Dorsolateral prefrontal cortex (tissue), 120 donors: ENCODE measurements at regions of chr7 and their contacts with region 1.

Region 1: DNA sequence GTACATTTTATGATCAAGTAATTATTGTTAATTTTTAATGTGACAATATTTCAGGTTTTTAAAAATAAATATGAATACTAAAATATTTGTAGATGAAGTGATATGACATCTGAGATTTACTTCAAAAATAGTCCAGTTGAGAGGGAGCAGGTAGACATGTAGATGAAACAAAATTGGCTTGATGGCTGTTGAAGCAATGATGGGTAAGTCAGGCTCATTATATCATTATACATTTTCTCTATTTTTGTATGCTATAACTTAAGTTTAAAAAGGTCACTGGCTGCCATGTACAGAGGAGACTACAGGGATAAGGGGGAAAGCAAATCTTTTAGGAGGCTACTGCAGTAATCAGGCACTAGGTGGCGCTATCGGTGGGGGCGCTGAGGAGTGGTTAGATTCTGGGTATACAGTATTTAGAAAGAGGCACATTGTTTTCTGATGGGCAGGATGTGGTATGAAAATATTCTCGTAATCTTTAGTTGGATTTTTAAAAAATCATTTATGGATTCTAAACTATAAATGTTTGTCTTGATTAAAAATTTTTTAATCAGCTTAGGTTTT is 189.8 kb upstream of the IMMP2L start:
- DNase-seq: peak in 8 of 10 donors; percentile 22 to 64 (median 56)
- H3K4me3 ChIP-seq: no peak overlapping the region
- H3K27ac ChIP-seq: peak overlapping the region in 21 of 59 donors; percentile 8 to 96 (median 90)
- H3K27me3 ChIP-seq: no peaks in the 10 kb centered on the region
- CTCF ChIP-seq: peak; percentile 53 to 84 (median 74)

Region 2: DNA sequence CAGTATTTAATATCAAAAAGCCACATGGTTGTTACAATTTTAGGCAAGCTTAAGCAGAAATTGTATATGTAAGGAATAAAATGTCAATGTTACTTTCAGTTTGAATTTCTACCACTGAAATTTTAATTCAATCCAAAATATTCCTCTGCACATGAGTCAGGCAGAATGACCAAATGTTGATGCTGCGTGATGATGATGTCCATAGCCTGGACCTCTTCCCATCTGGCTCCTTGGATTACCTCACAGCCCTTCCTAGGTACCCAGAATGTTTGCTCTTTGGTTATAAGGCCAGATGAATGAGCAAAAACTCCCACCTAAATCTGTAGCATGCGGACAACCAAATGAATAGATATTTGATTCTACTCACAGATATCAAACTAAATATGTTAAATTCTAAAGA is 68.5 kb after region 1 on chr7:
- intact Hi-C with region 1: no loop called
- DNase-seq: peak in 1 of 10 donors; percentile 43
- H3K4me3 ChIP-seq: no peak overlapping the region
- H3K27ac ChIP-seq: peak overlapping the region in 40 of 59 donors; percentile 2 to 84 (median 59)
- H3K27me3 ChIP-seq: no peaks in the 10 kb centered on the region
- CTCF ChIP-seq: no peak

Region 3: DNA sequence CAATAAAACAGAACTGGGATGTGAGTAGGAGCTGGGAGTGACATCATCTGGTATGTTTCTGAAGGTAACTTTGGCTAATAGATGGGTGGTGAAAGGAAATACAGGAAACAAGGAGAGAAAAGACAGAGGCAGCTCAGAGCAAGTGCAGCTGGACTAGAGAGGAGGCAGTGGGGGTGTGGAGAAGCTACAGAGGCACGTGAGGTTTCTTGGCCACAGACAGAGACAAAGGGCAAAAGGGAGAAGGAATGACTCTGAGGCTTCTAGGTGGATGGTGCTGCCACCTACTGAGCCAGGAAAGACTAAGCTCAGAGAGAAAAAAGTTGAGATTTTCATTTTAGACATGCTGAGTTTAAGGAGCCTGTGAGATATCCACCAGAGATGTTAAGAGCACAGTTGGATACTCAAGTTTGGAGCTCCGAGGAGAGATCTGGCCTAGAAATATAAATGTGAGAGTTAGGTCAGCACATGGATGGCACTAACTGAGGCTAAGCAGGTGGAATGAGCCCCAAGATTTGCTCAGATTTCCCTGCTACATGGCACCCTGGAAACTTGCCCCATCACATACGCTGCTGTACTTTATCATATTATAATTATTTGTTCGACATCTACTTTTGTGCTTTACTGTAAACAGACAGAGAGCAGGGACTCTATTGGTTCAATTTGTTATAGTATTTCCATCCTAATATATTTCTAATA is 103.2 kb after region 1 on chr7:
- intact Hi-C with region 1: loop called in 1 of 2 experiments (anchors 5 kb)
- DNase-seq: peak in 8 of 10 donors; percentile 36 to 70 (median 48)
- H3K4me3 ChIP-seq: no peak overlapping the region
- H3K27ac ChIP-seq: peak overlapping the region in 54 of 59 donors; percentile 1 to 83 (median 58)
- H3K27me3 ChIP-seq: no peaks in the 10 kb centered on the region
- CTCF ChIP-seq: peak; percentile 17 to 72 (median 56)

Region 4: DNA sequence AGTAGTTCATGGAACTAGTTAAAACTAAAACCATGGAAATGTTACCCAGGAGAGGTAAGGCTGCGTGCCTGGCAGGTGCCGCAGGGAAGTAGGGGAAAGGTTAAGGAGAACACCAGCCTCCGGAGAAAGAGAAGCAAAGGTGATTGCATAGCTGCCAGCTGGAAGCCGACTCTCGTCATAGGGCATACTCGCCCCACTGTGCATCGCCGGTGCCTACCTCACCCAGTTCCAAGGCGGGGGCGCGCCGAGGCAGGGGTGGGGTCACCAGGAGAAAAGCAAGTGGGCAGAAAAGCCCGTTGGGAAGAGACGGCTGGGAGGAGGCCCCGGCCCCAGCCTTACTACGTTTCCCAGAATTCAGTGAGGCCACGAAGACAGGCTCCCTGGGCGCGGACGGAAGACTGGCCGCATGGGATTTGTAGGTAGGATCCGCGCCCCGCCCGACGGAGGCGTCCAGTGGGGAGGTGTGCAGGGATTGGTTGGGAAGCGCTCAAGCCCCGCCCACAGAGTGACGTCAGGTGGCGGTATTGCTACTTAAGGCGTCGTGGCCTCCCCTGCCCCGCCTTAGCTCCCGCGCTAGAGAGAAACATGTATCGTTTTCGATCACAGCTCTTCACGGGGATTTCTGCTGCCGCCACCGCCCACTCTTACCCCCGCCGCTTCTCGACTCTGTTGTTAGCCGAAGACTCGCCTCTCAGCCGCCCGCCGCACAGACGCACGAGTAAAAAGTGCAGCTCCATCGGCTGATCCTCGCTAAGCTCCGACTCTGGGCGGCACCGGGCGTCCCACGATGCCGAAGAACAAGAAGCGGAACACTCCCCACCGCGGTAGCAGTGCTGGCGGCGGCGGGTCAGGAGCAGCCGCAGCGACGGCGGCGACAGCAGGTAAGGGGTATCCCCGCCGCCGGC is 698.1 kb after region 1 on chr7 and contains the start of gene IFRD1:
- intact Hi-C with region 1: loop called (anchors 5 to 10 kb)
- DNase-seq: peak; percentile 99 to 100 (median 100)
- H3K4me3 ChIP-seq: peak within 1 kb of the TSS; percentile 64 to 100 (median 97)
- H3K27ac ChIP-seq: peak within 1 kb of the TSS; percentile 54 to 99 (median 96)
- H3K27me3 ChIP-seq: no peaks in the 10 kb centered on the region
- CTCF ChIP-seq: peak in 19 of 56 donors; percentile 5 to 39 (median 16)
- total RNA-seq, gene IFRD1: 39.0 to 110 (median 58.1) TPM